Activated B cell treated with CpG ODN at 0.5 μM for 24 hours (primary cell): ENCODE measurements at regions of chr10 and their contacts with region 1.

Region 1: GRCh38 chr10:123559066-123559822 is 106.9 kb upstream of the GPR26 start:
- DNase-seq: peak; percentile 66
- ATAC-seq: peak; percentile 58
- H3K4me3 Mint-ChIP-seq: no peak overlapping the region
- H3K27ac Mint-ChIP-seq: no peak overlapping the region
- H3K4me1 Mint-ChIP-seq: no peaks in the 10 kb centered on the region
- H3K27me3 Mint-ChIP-seq: peaks cover 9% of the 10 kb centered on the region
- CTCF ChIP-seq: peak; percentile 98

Region 2: DNA sequence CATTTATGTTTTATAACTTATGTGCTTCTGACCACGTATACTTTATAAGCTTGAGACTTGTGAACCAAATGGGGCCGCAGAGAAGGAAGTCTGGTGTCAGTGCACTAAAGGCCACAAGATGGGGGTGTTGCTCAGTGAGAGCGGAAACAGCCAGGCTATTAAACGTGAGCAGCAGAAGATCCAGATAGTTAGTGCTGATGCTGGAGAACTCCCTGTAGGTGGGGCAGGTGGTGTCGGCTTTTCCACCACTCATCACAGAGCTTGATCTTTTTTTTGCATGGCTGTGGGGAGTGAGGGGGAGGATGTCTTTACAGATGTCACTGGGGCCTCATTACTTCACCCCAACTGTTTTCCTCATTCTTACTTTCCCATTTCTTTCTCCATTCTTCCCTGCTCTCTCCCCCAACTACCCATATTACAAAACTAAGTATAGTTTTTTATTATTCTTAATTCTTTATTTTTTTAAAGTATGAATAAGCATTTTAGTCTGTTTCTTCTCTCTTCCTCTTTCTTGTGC is 515.8 kb before region 1 on chr10:
- CTCF ChIA-PET with region 1: interaction called, 13 read pairs
- POLR2A ChIA-PET with region 1: no interaction called
- intact Hi-C with region 1: loop called (anchors 1 kb)
- DNase-seq: peak; percentile 16
- ATAC-seq: peak; percentile 69
- H3K4me3 Mint-ChIP-seq: no peak overlapping the region
- H3K27ac Mint-ChIP-seq: no peak overlapping the region
- H3K4me1 Mint-ChIP-seq: no peaks in the 10 kb centered on the region
- H3K27me3 Mint-ChIP-seq: no peaks in the 10 kb centered on the region
- CTCF ChIP-seq: no peak

Region 3: DNA sequence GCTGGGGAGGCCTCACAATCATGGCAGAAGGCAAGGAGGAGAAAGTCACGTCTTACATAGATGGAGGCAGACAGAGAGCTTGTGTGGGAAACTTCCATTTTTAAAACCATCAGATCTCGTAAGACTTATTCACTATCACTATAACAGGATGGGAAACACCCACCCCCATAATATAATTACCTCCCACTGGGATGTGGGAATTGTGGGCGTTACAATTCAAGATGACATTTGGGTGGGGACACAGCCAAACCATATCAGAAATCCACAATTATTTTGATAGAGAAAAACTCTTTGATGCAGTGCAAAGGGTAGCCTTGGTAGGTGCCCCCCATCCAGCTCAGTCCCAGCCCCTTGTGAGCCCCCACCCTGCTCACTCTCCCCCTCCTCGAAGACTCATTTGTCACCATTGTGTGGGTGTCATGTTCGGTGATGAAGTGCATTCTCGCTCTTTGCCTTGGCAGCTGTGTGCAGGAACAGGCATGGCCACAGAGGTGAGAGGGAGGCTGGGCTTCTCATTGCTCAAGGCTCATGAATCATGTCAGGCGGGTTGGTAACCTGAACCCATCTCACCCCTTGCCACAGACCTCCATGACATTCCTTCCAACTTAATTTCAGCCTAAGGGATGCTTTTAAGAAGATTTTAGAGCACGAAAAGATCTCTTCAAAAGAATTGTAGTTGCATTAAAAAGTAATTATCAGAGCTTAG is 329.2 kb before region 1 on chr10:
- CTCF ChIA-PET with region 1: no interaction called
- POLR2A ChIA-PET with region 1: no interaction called
- intact Hi-C with region 1: loop called (anchors 1 kb)
- DNase-seq: no peak
- ATAC-seq: no peak
- H3K4me3 Mint-ChIP-seq: no peak overlapping the region
- H3K27ac Mint-ChIP-seq: no peak overlapping the region
- H3K4me1 Mint-ChIP-seq: no peaks in the 10 kb centered on the region
- H3K27me3 Mint-ChIP-seq: no peaks in the 10 kb centered on the region
- CTCF ChIP-seq: no peak

Region 4: GRCh38 chr10:123402656-123403055 is 156.6 kb before region 1 on chr10:
- CTCF ChIA-PET with region 1: no interaction called
- POLR2A ChIA-PET with region 1: no interaction called
- intact Hi-C with region 1: loop called (anchors 10 kb)
- DNase-seq: no peak
- ATAC-seq: peak; percentile 92
- H3K4me3 Mint-ChIP-seq: peak overlapping the region; percentile 59
- H3K27ac Mint-ChIP-seq: peak overlapping the region; percentile 85
- H3K4me1 Mint-ChIP-seq: peaks cover 56% of the 10 kb centered on the region
- H3K27me3 Mint-ChIP-seq: no peaks in the 10 kb centered on the region
- CTCF ChIP-seq: no peak